ENCODE measurements at regions of chr19 and their contacts with region 1.

Region 1: GRCh38 chr19:46728693-46729676 is 12.1 kb upstream of the PRKD2 start:
- DNase-seq: peak; percentile 92

Region 2: GRCh38 chr19:46692918-46693722 is 35.9 kb before region 1 on chr19:
- intact Hi-C with region 1: no loop called
- DNase-seq: no peak

Region 3: GRCh38 chr19:46704379-46705076 is 24.5 kb before region 1 on chr19:
- intact Hi-C with region 1: loop called (anchors 1 kb)
- DNase-seq: peak; percentile 89

Region 4: GRCh38 chr19:46717034-46717723 is 11.8 kb before region 1 on chr19 and contains the start of gene PRKD2:
- intact Hi-C with region 1: no loop called
- DNase-seq: peak; percentile 96
- total RNA-seq, gene PRKD2: 13.3 TPM

Region 5: GRCh38 chr19:46746281-46747013 is 17.5 kb after region 1 on chr19 and contains the start of gene STRN4:
- intact Hi-C with region 1: no loop called
- DNase-seq: no peak
- total RNA-seq, gene STRN4: 54.2 TPM

Region 6: DNA sequence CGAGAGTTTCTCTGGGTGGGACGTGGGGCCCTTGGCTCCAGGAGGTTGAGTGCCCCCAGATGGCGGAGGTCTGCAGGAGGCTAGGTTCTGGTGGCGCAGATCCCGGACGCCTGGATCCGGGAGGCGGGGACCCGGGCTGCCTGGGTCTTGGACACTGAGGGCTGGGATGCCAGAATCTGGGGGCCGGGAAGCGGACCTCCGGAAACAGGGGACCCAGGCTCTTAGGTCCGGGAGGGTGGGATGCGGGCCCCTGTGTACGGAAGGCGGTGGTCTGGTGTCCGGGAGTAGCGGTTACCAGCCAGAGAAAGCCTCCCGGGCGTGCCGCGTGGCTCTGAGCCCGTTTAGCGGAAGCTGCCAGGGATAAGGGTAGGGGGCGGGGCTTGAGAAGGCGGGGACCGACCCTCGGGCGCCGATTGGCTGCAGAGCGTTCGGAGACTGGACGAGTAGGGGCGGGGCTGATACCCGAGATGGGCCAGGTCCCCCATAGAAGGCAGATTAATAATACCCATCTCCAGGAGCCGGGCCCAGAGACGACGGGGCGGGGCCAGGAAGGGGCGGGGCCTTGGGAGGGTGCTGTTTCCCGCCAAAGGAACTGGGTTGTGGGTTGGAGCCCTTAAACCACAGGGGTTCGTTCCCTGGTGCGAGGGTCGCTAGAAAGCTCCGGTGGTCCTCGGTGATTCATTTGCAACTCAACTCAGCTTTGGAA is 59.4 kb after region 1 on chr19 and contains the start of gene SLC1A5:
- intact Hi-C with region 1: no loop called
- DNase-seq: peak; percentile 97
- total RNA-seq, gene SLC1A5: 6.8 TPM

Measured in cardiac septum (tissue), 1 donor.